Mammary epithelial cell (primary cell): ENCODE measurements at regions of chr10 and their contacts with region 1.

Region 1: DNA sequence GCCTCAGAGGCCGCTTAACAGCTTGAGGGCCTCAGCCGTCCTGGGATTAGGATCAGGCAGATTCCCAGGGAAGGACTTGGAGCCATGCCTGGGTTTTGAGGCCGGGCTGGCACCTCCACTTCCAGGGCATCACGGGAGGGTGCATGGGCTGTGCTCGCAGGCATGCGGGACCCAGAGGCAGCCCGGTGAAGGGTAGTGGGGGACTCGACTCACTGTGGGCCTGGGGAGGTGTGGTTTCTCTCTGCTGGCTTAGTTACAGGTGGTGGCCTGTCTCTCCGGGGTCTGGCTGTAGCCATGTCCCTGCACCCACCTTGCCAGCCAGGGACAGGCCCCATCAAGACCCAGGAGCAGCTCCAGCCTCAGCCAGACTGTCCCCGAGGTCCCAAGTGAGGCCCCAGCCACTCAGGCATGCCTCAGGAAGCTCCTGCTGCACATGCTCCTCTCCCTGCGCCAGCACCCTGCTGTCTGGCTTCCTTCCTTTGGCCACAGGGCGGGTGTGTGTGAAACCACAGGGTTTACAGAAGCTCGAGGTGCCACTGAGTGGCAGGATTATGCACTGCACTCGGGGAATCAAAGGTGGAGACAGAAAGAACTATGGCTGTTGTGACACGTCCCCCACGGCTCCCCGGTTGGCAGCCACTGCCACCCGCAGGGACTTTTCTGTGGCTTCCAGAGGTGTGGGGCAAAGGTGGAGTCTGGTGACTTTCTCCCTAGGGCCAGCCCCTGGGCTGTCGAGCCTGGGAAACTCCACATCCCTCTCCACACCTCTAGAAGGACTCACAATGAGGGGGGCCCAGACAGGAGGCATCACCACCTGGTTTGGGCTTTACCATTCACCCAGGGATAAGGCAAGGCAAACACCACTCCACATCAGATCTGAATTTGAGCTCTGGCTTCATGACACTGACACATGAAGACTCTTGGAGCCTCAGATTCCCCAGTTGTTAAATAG is 19.7 kb downstream of the GOLGA7B start:
- DNase-seq: peak; percentile 86
- H3K4me3 ChIP-seq: no peak overlapping the region
- H3K27ac ChIP-seq: no peak overlapping the region
- H3K4me1 ChIP-seq: peaks cover 9% of the 10 kb centered on the region
- H3K27me3 ChIP-seq: no peaks in the 10 kb centered on the region
- CTCF ChIP-seq: peak; percentile 97

Region 2: GRCh38 chr10:97701438-97702069 is 167.8 kb before region 1 on chr10:
- CTCF ChIA-PET with region 1: interaction called, 4 read pairs
- dilution Hi-C with region 1: no loop called
- in situ Hi-C with region 1: no loop called
- intact Hi-C with region 1: loop called (anchors 1 kb)
- DNase-seq: peak; percentile 75
- H3K4me3 ChIP-seq: no peak overlapping the region
- H3K27ac ChIP-seq: no peak overlapping the region
- H3K4me1 ChIP-seq: peaks cover 14% of the 10 kb centered on the region
- H3K27me3 ChIP-seq: no peaks in the 10 kb centered on the region
- CTCF ChIP-seq: peak; percentile 93 to 95

Region 3: DNA sequence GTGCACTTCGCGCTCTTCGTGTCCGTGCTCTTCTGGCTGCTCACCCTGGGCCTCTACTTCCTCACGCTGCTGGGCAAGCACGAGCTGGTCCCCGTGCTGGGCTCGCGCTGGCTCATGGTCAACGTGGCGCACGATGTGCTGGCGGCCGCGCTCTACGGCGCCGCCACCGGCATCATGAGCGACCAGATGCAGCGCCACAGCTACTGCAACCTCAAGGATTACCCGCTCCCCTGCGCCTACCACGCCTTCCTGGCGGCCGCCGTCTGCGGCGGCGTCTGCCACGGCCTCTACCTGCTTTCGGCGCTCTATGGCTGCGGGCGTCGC is 155.4 kb before region 1 on chr10:
- CTCF ChIA-PET with region 1: no interaction called
- dilution Hi-C with region 1: no loop called
- in situ Hi-C with region 1: no loop called
- intact Hi-C with region 1: loop called (anchors 1 kb)
- DNase-seq: peak; percentile 81
- H3K4me3 ChIP-seq: peak overlapping the region; percentile 46 to 80 (median 72)
- H3K27ac ChIP-seq: peak overlapping the region; percentile 80
- H3K4me1 ChIP-seq: peaks cover 44% of the 10 kb centered on the region
- H3K27me3 ChIP-seq: no peaks in the 10 kb centered on the region
- CTCF ChIP-seq: peak in 1 of 2 donors; percentile 42

Region 4: GRCh38 chr10:97792141-97792721 is 77.1 kb before region 1 on chr10:
- CTCF ChIA-PET with region 1: no interaction called
- dilution Hi-C with region 1: loop called (anchors 5 kb)
- in situ Hi-C with region 1: loop called (anchors 5 kb)
- intact Hi-C with region 1: loop called (anchors 1 kb)
- DNase-seq: peak; percentile 39
- H3K4me3 ChIP-seq: no peak overlapping the region
- H3K27ac ChIP-seq: no peak overlapping the region
- H3K4me1 ChIP-seq: no peaks in the 10 kb centered on the region
- H3K27me3 ChIP-seq: no peaks in the 10 kb centered on the region
- CTCF ChIP-seq: peak; percentile 90 to 98

Region 5: GRCh38 chr10:97810446-97810845 is 58.9 kb before region 1 on chr10:
- CTCF ChIA-PET with region 1: no interaction called
- dilution Hi-C with region 1: no loop called
- in situ Hi-C with region 1: no loop called
- intact Hi-C with region 1: no loop called
- DNase-seq: peak; percentile 47
- H3K4me3 ChIP-seq: no peak overlapping the region
- H3K27ac ChIP-seq: no peak overlapping the region
- H3K4me1 ChIP-seq: peaks cover 3% of the 10 kb centered on the region
- H3K27me3 ChIP-seq: no peaks in the 10 kb centered on the region
- CTCF ChIP-seq: no peak

Region 6: DNA sequence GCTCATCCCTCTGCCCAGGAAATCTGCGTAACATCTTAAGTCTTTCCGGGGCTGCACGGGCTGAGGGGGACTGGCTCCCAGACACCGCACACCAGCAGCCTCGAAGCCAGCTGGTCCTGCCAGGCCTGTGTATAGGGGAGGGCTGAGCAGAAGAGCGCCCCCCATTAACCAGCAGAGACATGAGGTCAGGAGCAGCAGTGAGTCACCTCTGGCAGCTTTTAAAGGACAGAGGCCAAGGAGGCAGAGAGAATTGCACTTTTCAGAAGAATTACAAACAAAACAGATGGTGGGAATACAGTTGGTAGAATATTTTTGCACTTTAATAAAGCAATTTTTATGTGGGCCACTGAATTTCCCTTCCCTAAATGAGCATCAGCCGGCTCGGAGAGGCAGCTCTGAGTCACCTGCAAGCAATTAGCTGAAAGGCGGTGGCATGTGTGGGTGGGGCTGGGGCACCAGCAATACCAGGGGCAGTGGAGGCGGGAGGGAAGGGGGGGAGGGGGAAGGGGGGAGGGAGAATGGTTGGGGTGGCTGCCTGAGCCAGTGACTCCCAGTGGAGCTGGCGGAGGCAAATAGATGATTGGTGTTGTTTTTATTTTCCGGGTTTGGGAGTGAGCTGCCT is 19.4 kb after region 1 on chr10:
- CTCF ChIA-PET with region 1: no interaction called
- dilution Hi-C with region 1: no loop called
- in situ Hi-C with region 1: no loop called
- intact Hi-C with region 1: no loop called
- DNase-seq: peak; percentile 82
- H3K4me3 ChIP-seq: no peak overlapping the region
- H3K27ac ChIP-seq: peak overlapping the region; percentile 0
- H3K4me1 ChIP-seq: peaks cover 16% of the 10 kb centered on the region
- H3K27me3 ChIP-seq: no peaks in the 10 kb centered on the region
- CTCF ChIP-seq: peak in 1 of 2 donors; percentile 10

Region 7: GRCh38 chr10:98262571-98262970 is 393.2 kb after region 1 on chr10:
- CTCF ChIA-PET with region 1: no interaction called
- dilution Hi-C with region 1: no loop called
- in situ Hi-C with region 1: no loop called
- intact Hi-C with region 1: no loop called
- DNase-seq: peak; percentile 42
- H3K4me3 ChIP-seq: no peak overlapping the region
- H3K27ac ChIP-seq: no peak overlapping the region
- H3K4me1 ChIP-seq: peaks cover 2% of the 10 kb centered on the region
- H3K27me3 ChIP-seq: no peaks in the 10 kb centered on the region
- CTCF ChIP-seq: peak; percentile 47 to 82